ENCODE measurements at regions of chr21 and their contacts with region 1.

Region 1: DNA sequence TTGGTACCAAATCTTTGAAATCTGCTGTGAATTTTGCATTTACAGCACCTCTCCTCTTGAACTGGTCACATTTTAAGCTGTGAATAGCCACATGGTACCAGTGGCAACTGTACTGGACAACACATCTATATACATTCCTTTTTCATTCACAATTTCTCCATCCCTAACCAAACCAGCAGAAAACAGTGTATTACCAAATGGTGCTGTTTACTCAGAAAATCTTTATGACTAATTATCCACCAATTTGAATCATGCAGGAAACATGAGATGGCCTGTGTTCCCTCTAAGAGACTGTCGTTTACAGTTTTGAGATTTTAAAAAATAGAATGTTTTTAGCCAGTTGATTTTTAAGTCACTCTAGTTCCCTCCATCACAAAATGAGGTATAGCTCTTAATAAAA is 17.6 kb upstream of the CCT8 start:
- DNase-seq: peak; percentile 84
- ATAC-seq: peak; percentile 75
- H3K4me3 ChIP-seq: no peak overlapping the region
- H3K27ac ChIP-seq: 0 out of 2 replicates have a peak overlapping the region, but pooled peaks have one; percentile 94
- H3K4me1 ChIP-seq: peaks cover 17% of the 10 kb centered on the region
- H3K27me3 ChIP-seq: no peaks in the 10 kb centered on the region
- CTCF ChIP-seq: no peak
- POLR2A ChIP-seq: no peak
- RAD21 ChIP-seq: peak; percentile 17

Region 2: GRCh38 chr21:28975397-28975796 is 115.6 kb before region 1 on chr21:
- CTCF ChIA-PET with region 1: no interaction called
- POLR2A ChIA-PET with region 1: no interaction called
- dilution Hi-C with region 1: no loop called
- in situ Hi-C with region 1: no loop called
- intact Hi-C with region 1: no loop called
- DNase-seq: peak; percentile 45
- ATAC-seq: peak; percentile 73
- H3K4me3 ChIP-seq: no peak overlapping the region
- H3K27ac ChIP-seq: no peak overlapping the region
- H3K4me1 ChIP-seq: peaks cover 11% of the 10 kb centered on the region
- H3K27me3 ChIP-seq: no peaks in the 10 kb centered on the region
- CTCF ChIP-seq: no peak
- POLR2A ChIP-seq: no peak
- RAD21 ChIP-seq: no peak

Region 3: GRCh38 chr21:29114765-29115164 is 23.7 kb after region 1 on chr21:
- CTCF ChIA-PET with region 1: no interaction called
- POLR2A ChIA-PET with region 1: no interaction called
- dilution Hi-C with region 1: no loop called
- in situ Hi-C with region 1: no loop called
- intact Hi-C with region 1: no loop called
- DNase-seq: peak; percentile 92
- ATAC-seq: peak; percentile 91
- H3K4me3 ChIP-seq: no peak overlapping the region
- H3K27ac ChIP-seq: peak overlapping the region; percentile 65
- H3K4me1 ChIP-seq: peaks cover 4% of the 10 kb centered on the region; the same call in 1 of the 2 replicates
- H3K27me3 ChIP-seq: no peaks in the 10 kb centered on the region
- CTCF ChIP-seq: no peak
- POLR2A ChIP-seq: no peak
- RAD21 ChIP-seq: no peak

Region 4: GRCh38 chr21:29145354-29145782 is 54.3 kb after region 1 on chr21:
- CTCF ChIA-PET with region 1: no interaction called
- POLR2A ChIA-PET with region 1: interaction called, 4 read pairs
- dilution Hi-C with region 1: no loop called
- in situ Hi-C with region 1: no loop called
- intact Hi-C with region 1: loop called (anchors 5 kb)
- DNase-seq: peak; percentile 95
- ATAC-seq: peak; percentile 73
- H3K4me3 ChIP-seq: no peak overlapping the region
- H3K27ac ChIP-seq: peak overlapping the region; percentile 21
- H3K4me1 ChIP-seq: peaks cover 19% of the 10 kb centered on the region
- H3K27me3 ChIP-seq: no peaks in the 10 kb centered on the region
- CTCF ChIP-seq: no peak
- POLR2A ChIP-seq: no peak
- RAD21 ChIP-seq: no peak

Region 5: DNA sequence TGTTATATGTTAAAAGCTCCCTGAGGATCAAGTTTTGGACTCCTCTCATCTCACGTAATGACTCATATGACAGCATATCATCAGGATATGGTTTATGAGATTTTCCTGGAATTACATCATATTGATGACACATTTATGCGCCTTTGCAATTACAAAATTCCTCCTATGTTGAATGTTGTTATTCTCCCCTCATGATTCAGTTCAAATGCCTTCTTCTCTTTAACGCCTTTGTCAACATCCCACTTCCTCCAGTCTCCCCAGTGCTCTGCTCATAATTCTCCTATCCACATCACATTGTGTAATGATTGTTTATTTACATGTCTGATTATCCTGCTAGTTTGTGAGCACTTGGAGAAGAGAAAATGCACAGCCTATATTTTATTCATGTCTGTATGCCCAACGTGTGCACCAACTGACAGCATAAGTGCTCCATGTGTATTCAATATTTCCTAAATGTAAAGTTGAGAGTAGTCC is 126.8 kb after region 1 on chr21:
- CTCF ChIA-PET with region 1: no interaction called
- POLR2A ChIA-PET with region 1: no interaction called
- dilution Hi-C with region 1: no loop called
- in situ Hi-C with region 1: no loop called
- intact Hi-C with region 1: loop called (anchors 5 kb)
- DNase-seq: peak; percentile 99
- ATAC-seq: peak; percentile 73
- H3K4me3 ChIP-seq: no peak overlapping the region
- H3K27ac ChIP-seq: peak overlapping the region; percentile 5; the same call in 1 of the 2 replicates
- H3K4me1 ChIP-seq: peaks cover 10% of the 10 kb centered on the region
- H3K27me3 ChIP-seq: no peaks in the 10 kb centered on the region
- CTCF ChIP-seq: no peak
- POLR2A ChIP-seq: no peak
- RAD21 ChIP-seq: no peak

Region 6: DNA sequence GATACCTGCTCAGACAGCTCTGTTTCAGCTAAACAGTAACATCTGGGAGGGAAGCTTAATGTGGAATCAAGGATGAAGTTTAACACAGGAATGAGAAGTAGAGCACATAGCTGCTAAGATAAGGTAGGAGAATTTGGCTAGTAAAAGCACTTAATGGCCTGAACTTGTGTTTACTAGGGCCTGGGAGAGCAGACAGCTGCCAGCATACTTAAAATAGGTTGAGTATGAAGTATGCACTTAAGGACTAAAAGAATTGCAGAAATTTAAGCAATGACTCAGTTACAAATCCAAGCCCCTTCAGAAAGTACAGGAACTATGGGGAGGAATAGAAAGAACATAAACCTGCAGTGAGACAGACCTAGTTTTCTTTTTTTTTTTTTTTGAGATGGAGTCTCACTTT is 260.7 kb after region 1 on chr21:
- CTCF ChIA-PET with region 1: no interaction called
- POLR2A ChIA-PET with region 1: no interaction called
- dilution Hi-C with region 1: no loop called
- in situ Hi-C with region 1: no loop called
- intact Hi-C with region 1: loop called (anchors 1 kb)
- DNase-seq: peak; percentile 91
- ATAC-seq: peak; percentile 82
- H3K4me3 ChIP-seq: no peak overlapping the region
- H3K27ac ChIP-seq: peak overlapping the region; percentile 62
- H3K4me1 ChIP-seq: peaks cover 32% of the 10 kb centered on the region
- H3K27me3 ChIP-seq: no peaks in the 10 kb centered on the region
- CTCF ChIP-seq: no peak
- POLR2A ChIP-seq: no peak
- RAD21 ChIP-seq: no peak

Region 7: DNA sequence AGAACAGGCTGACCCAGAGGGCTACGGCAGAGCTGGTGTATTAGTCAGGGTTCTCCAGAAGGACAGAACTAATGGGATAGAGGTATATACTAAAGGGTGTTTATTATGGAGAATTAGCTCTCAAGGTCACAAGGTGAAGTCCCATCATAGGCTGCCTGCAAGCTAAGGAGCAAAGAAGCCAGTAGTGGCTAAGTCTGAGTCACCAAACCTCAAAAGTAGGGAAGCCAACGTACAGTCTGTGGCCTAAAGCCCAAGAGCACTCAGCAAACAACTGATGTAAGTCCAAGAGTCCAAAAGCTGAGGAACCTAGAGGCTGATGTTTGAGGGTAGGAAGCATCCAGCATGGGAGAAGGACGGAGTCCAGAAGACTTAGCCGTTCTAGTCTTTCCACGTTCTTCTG is 386.9 kb after region 1 on chr21:
- CTCF ChIA-PET with region 1: interaction called, 3 read pairs
- POLR2A ChIA-PET with region 1: no interaction called
- dilution Hi-C with region 1: no loop called
- in situ Hi-C with region 1: no loop called
- intact Hi-C with region 1: loop called (anchors 5 kb)
- DNase-seq: peak; percentile 71
- ATAC-seq: peak; percentile 13; the same call in 1 of the 2 replicates
- H3K4me3 ChIP-seq: no peak overlapping the region
- H3K27ac ChIP-seq: no peak overlapping the region
- H3K4me1 ChIP-seq: peaks cover 19% of the 10 kb centered on the region
- H3K27me3 ChIP-seq: no peaks in the 10 kb centered on the region
- CTCF ChIP-seq: no peak
- POLR2A ChIP-seq: no peak
- RAD21 ChIP-seq: no peak

Region 8: DNA sequence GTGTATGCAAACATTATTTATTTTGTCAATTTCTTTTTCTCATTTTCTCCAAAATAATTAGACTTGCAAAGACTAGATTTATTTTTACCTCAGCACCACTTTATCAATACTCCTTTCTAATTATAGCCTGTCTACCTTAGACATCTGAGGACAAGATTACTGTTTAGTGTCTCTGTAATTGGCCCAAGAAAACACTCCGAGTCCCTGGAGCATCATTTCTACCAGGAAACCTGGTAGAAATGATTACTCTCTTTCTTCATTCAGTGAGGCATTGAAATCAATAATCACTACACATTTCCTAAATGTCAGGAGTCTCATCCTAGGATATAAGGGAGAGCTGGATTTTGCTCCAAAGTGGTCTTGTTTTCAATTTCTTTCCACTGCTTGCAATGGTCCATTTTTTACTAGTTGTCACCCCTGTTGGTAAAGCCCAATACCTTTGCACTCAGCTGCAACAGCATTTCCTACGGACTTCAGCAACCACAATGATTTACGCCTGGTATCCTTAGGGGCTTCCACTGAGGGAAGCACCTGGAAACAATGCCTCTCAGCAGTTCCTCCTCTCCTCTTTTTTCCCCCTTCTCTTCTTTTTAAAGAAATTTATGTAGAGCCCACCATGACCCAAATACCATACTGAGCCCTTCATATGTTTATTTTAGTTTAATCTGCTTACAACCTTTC is 784.1 kb after region 1 on chr21:
- CTCF ChIA-PET with region 1: no interaction called
- POLR2A ChIA-PET with region 1: interaction called, 30 read pairs
- dilution Hi-C with region 1: no loop called
- in situ Hi-C with region 1: no loop called
- intact Hi-C with region 1: no loop called
- DNase-seq: no peak
- ATAC-seq: no peak
- H3K4me3 ChIP-seq: no peak overlapping the region
- H3K27ac ChIP-seq: no peak overlapping the region
- H3K4me1 ChIP-seq: no peaks in the 10 kb centered on the region
- H3K27me3 ChIP-seq: no peaks in the 10 kb centered on the region; the same call in 1 of the 2 replicates
- CTCF ChIP-seq: no peak
- POLR2A ChIP-seq: no peak
- RAD21 ChIP-seq: no peak

Region 9: DNA sequence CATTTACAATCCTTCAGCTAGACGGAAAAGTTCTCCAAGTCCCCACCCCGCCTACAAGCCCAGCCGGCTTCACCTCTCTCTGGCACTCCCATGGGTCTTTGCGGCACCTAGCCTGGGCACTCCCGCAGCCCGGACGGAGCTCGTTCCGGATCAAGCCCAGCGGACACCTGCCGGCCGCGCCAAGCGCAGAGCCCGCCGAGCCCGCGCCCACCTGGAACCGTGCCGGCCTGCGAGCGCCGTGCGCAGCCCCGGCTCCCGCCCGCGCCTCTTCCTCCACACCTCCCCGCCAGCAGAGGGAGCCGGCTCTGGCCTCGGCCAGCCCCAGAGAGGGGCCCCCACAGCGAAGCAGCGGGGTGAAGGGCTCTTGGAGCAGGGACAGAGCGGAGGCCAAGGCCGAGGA is 1997.3 kb after region 1 on chr21:
- CTCF ChIA-PET with region 1: no interaction called
- POLR2A ChIA-PET with region 1: no interaction called
- dilution Hi-C with region 1: no loop called
- in situ Hi-C with region 1: loop called (anchors 25 kb)
- intact Hi-C with region 1: loop called (anchors 5 kb)
- DNase-seq: no peak
- ATAC-seq: no peak
- H3K4me3 ChIP-seq: no peak overlapping the region
- H3K27ac ChIP-seq: no peak overlapping the region
- H3K4me1 ChIP-seq: no peaks in the 10 kb centered on the region
- H3K27me3 ChIP-seq: no peaks in the 10 kb centered on the region
- CTCF ChIP-seq: no peak
- POLR2A ChIP-seq: no peak
- RAD21 ChIP-seq: no peak